H1 (cell line): ENCODE measurements at regions of chr4 and their contacts with region 1.

Region 1: DNA sequence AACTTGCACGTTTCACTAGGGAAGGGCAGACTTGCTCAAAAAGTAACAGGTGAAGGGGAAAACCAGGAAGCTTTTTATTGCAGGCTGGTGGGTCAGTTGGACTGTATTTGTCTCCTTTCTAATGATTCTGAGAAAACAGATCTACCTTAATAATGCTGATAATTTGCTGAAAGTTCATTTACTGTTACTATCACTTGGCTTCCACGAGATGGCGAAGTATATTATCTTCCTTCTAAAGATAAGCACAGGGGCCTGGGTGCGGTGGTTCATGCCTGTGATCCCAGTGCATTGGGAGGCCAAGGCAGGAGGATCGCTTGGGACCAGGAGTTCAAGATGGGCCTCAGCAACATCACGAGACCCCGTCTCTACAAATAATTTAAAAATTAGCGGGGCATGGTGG is 16.4 kb downstream of the CCKAR start:
- DNase-seq: no peak
- H3K4me3 ChIP-seq: no peak overlapping the region
- H3K27ac ChIP-seq: no peak overlapping the region
- H3K4me1 ChIP-seq: no peaks in the 10 kb centered on the region
- H3K27me3 ChIP-seq: no peaks in the 10 kb centered on the region
- CTCF ChIP-seq: no peak
- EP300 ChIP-seq: no peak
- POLR2A ChIP-seq: no peak
- RAD21 ChIP-seq: peak in 1 of 2 experiments; percentile 21; a peak in 2 of 4 replicates

Region 2: DNA sequence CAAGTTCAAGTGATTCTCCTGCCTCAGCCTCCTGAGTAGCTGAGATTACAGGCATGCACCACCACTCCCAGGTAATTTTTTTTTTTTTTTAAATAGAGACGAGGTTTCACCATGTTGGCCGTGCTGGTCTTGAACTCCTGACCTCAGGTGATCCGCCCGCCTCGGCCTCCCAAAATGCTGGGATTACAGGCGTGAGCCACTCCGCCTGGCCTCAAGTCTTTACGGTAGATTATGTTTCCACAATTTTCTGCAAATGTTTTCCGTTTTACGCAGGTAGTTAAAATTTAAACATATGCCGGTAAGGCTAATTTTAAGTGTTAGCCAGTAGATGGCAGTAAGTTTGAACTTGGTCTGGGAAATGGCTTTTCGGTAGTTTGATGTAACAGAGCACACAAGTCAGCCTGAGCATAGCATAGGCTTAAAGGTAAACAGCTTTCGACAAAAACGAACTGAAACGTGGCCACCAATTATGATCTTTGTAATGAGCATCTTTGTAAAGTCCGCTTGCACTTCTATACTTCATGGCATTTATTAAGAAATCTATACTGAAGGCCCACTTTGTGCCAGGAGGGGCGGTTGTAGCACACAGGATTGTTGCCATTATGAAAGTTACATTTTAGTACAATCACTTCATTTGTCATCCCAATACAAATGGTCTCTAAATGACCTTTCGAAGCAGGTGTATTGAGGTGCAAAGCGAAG is 14.7 kb before region 1 on chr4:
- CTCF ChIA-PET with region 1: interaction called, 33 read pairs
- POLR2A ChIA-PET with region 1: no interaction called
- DNase-seq: peak in 1 of 2 experiments; percentile 9
- H3K4me3 ChIP-seq: no peak overlapping the region
- H3K27ac ChIP-seq: no peak overlapping the region
- H3K4me1 ChIP-seq: no peaks in the 10 kb centered on the region
- H3K27me3 ChIP-seq: no peaks in the 10 kb centered on the region
- CTCF ChIP-seq: peak in 2 of 3 experiments; percentile 44 to 60; a peak in 2 of 4 replicates
- EP300 ChIP-seq: no peak
- POLR2A ChIP-seq: no peak
- RAD21 ChIP-seq: peak; percentile 66 to 75